ENCODE measurements at regions of chr15 and their contacts with region 1.

Region 1: DNA sequence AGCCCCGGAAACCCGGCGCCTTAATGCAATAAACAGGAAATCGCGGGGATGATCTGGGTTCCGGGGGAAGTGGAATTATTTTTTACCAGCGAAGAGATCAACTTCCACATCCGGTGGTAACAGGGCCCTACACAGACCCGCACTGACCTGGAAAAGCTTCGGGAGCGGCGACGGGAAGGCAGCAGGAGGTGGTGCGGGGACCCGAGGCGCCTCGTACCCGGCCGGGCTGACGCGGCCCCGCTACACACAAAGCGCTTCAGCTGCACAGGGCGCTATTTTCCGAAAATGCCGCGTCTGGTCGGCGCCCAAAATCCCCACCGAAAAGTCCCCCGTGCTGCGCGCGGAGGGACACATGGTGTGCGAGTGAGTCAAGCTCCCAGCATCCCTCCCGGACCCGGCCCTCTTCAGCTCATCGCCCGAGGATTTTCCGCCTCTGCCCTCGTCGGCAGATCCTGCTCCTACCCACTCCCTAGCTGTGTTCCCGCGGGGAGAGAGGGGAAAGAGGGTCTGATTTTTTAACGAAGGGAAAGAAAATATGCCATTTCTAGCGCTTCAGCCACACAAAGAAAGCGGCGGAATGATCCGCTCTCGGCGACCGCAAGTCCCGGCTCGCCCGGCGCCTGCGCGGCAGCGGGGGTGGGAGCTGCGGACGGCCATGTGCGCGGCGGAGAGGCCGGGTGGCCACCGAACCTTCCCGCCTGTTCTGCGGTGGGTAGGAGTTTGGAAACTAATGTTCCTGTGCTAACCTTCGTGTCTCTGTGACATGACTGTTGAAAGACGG is at the start of gene GABPB1:
- DNase-seq: peak; percentile 87 to 95
- ATAC-seq: peak; percentile 53 to 67 (median 63)
- H3K4me3 ChIP-seq: peak within 1 kb of the TSS; percentile 99
- H3K4me3 Mint-ChIP-seq: peak within 1 kb of the TSS; percentile 99
- H3K27ac ChIP-seq: peak within 1 kb of the TSS; percentile 100
- H3K27ac Mint-ChIP-seq: peak within 1 kb of the TSS; percentile 97 to 100
- H3K4me1 ChIP-seq: peaks cover 25% of the 10 kb centered on the region
- H3K4me1 Mint-ChIP-seq: peaks cover 62 to 64% of the 10 kb centered on the region in 2 donors
- H3K27me3 ChIP-seq: no peaks in the 10 kb centered on the region
- H3K27me3 Mint-ChIP-seq: no peaks in the 10 kb centered on the region
- CTCF ChIP-seq: no peak
- total RNA-seq, gene GABPB1: 20.8 to 30.8 (median 26.3) TPM

Region 2: GRCh38 chr15:49155110-49155833 is 1199.8 kb before region 1 on chr15 and contains the start of gene COPS2:
- intact Hi-C with region 1: loop called (anchors 5 kb)
- DNase-seq: peak; percentile 87 to 97
- ATAC-seq: peak; percentile 92 to 99 (median 95)
- H3K4me3 ChIP-seq: peak within 1 kb of the TSS; percentile 87
- H3K4me3 Mint-ChIP-seq: peak within 1 kb of the TSS; percentile 99
- H3K27ac ChIP-seq: peak within 1 kb of the TSS; percentile 90
- H3K27ac Mint-ChIP-seq: peak within 1 kb of the TSS; percentile 95 to 99
- H3K4me1 ChIP-seq: peaks cover 7% of the 10 kb centered on the region
- H3K4me1 Mint-ChIP-seq: peaks cover 27 to 32% of the 10 kb centered on the region in 2 donors
- H3K27me3 ChIP-seq: no peaks in the 10 kb centered on the region
- H3K27me3 Mint-ChIP-seq: no peaks in the 10 kb centered on the region
- CTCF ChIP-seq: no peak
- total RNA-seq, gene COPS2: 77.6 to 90.7 (median 89.3) TPM

Region 3: DNA sequence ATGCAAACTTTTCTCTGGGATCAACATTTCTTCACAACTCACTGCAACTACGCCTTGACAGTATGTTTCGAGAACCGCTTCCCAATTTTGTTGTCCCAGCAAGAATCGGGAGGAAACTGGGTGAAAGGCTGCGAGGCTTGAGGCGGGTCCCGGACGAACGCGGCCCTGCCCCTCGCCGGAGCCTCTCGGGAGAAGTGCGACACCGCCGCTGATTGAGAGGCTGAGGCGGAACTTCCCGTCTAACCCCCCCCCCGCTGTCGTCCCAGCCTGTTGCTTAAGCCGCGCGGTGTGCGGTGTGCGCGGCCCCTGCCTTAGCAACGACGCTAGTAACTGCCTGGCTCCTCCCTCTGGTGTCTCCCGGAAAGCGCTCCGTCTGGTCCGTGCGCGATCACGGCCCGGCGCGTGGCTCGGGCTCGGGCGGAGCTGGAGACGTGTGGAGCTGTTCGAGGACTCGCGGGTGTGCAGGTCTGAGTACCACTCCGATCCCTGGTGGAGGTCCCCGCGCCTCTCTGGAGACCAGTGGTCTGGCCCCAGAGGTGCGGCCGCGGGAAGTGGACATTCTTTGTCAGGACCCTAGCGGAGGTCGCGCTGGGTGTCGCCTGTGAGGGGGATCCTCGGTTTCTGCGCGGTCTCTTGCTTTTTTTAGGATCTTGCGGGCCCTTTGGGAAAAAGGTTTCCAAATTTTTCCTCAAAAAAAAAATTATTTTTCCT is 734.2 kb before region 1 on chr15 and contains the starts of genes DTWD1 and FAM227B:
- intact Hi-C with region 1: loop called (anchors 2 kb)
- DNase-seq: peak; percentile 88 to 97
- ATAC-seq: peak; percentile 96 to 100 (median 98)
- H3K4me3 ChIP-seq: peak within 1 kb of the TSS; percentile 97
- H3K4me3 Mint-ChIP-seq: peak within 1 kb of the TSS; percentile 98
- H3K27ac ChIP-seq: peak within 1 kb of the TSS; percentile 82
- H3K27ac Mint-ChIP-seq: peak within 1 kb of the TSS; percentile 96 to 97
- H3K4me1 ChIP-seq: peaks cover 6% of the 10 kb centered on the region
- H3K4me1 Mint-ChIP-seq: peaks cover 33 to 37% of the 10 kb centered on the region in 2 donors
- H3K27me3 ChIP-seq: no peaks in the 10 kb centered on the region
- H3K27me3 Mint-ChIP-seq: no peaks in the 10 kb centered on the region
- CTCF ChIP-seq: no peak
- total RNA-seq, gene DTWD1: 10.0 to 14.1 (median 12.3) TPM
- total RNA-seq, gene FAM227B: 3.8 to 5.0 (median 4.9) TPM

Region 4: GRCh38 chr15:50260969-50261496 is 94.0 kb before region 1 on chr15:
- intact Hi-C with region 1: loop called (anchors 1 kb)
- DNase-seq: no peak
- ATAC-seq: peak in 2 of 3 donors; percentile 3 to 64
- H3K4me3 ChIP-seq: no peak overlapping the region
- H3K4me3 Mint-ChIP-seq: peak overlapping the region; percentile 72
- H3K27ac ChIP-seq: no peak overlapping the region
- H3K27ac Mint-ChIP-seq: peak overlapping the region; percentile 86 to 88
- H3K4me1 ChIP-seq: peaks cover 47% of the 10 kb centered on the region
- H3K4me1 Mint-ChIP-seq: peaks cover 40 to 42% of the 10 kb centered on the region in 2 donors
- H3K27me3 ChIP-seq: no peaks in the 10 kb centered on the region
- H3K27me3 Mint-ChIP-seq: no peaks in the 10 kb centered on the region
- CTCF ChIP-seq: no peak

Region 5: DNA sequence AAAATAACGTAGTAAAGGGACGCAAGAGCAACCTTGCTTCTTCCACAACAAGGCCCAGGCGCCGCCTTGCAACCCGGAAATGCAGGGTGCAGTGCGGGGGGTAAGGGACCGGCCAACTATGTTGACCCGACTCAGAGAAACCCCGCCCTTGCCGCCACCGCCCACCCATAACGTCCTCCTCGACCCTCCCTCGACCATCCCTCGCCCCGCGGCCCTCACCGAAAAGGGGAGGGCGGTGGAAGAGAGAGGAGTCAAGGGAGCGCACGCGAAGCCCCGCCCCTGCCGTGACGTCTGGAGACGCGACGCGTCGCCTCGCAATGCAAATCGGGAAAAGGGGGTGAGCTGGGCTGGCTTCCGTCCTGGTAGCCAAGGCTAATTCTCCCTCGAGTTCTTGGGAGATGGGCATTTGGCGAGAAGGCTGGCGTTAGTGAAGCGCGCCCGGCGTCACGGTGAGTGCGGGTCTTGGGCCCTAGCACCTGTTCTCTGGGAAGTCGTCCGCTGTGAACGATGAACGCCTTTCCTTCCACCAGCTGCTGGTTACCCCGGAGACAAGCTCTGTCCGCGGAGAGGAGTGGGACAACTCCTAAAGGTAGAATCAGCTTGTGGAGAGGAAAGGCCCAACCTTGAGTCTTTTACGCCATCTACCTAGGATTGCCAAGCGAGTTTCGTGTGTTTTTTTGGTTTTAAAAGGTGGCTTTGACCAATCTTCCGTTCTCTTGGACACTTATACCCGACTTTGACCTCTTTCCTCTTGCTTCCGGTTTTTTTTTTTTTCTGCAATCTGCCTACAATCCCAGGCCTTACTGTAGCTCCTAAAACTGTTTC is 69.2 kb after region 1 on chr15 and contains the start of gene USP8:
- intact Hi-C with region 1: loop called (anchors 1 kb)
- DNase-seq: peak; percentile 93 to 97
- ATAC-seq: peak; percentile 95 to 97 (median 95)
- H3K4me3 ChIP-seq: peak within 1 kb of the TSS; percentile 98
- H3K4me3 Mint-ChIP-seq: peak within 1 kb of the TSS; percentile 99
- H3K27ac ChIP-seq: peak within 1 kb of the TSS; percentile 90
- H3K27ac Mint-ChIP-seq: peak within 1 kb of the TSS; percentile 96 to 98
- H3K4me1 ChIP-seq: peaks cover 11% of the 10 kb centered on the region
- H3K4me1 Mint-ChIP-seq: peaks cover 36 to 39% of the 10 kb centered on the region in 2 donors
- H3K27me3 ChIP-seq: no peaks in the 10 kb centered on the region
- H3K27me3 Mint-ChIP-seq: no peaks in the 10 kb centered on the region
- CTCF ChIP-seq: no peak
- total RNA-seq, gene USP8: 81.0 to 87.7 (median 81.4) TPM

Region 6: DNA sequence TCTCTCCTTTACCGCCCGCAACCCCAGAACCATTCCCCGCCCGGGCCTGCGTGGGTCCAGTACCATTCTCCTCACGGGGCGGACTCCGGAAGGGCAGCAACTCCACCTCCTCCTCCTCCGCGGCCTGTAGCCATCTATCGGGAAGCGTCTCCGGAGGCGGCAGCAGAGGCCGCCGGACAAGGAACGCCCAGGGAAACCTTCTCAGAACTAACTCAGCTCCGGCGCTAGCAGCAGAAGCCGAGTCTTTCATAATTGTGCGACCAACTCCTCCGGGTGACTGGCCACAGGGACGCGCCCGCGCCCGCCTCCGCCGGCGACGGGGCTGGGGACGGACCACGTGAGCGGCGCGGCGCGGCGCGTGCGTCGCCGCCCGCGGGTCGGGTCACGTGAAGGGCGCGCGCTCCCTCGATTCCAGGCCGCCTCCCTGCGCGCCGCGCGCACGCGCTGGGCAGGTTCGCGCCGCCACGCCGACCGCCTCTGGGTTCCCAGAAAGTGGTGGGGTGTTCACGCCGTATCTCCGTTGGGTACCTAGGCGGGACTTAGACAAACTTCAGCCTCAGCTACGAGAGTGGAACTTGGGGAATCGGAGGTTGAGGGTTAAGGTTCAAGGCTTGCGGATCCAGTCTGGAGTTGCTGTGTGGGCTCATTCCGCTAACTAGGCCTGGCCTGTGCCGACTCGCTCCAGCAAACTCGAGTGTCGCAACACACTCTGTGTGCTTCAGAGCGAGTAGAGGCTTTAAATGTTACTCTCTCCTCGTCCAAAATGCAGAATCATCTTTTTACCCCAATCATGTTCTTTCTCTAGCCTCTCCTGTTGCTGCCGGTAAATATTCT is 331.7 kb after region 1 on chr15 and contains the start of gene TRPM7:
- intact Hi-C with region 1: loop called (anchors 10 kb)
- DNase-seq: peak; percentile 92 to 96
- ATAC-seq: peak; percentile 76 to 96 (median 88)
- H3K4me3 ChIP-seq: peak within 1 kb of the TSS; percentile 91
- H3K4me3 Mint-ChIP-seq: peak within 1 kb of the TSS; percentile 99
- H3K27ac ChIP-seq: peak within 1 kb of the TSS; percentile 94
- H3K27ac Mint-ChIP-seq: peak within 1 kb of the TSS; percentile 97
- H3K4me1 ChIP-seq: peaks cover 20% of the 10 kb centered on the region
- H3K4me1 Mint-ChIP-seq: peaks cover 42 to 49% of the 10 kb centered on the region in 2 donors
- H3K27me3 ChIP-seq: no peaks in the 10 kb centered on the region
- H3K27me3 Mint-ChIP-seq: no peaks in the 10 kb centered on the region
- CTCF ChIP-seq: no peak
- total RNA-seq, gene TRPM7: 41.8 to 54.4 (median 50.9) TPM

Region 7: GRCh38 chr15:50774450-50774849 is 419.4 kb after region 1 on chr15:
- intact Hi-C with region 1: loop called (anchors 5 kb)
- DNase-seq: peak in 1 of 2 donors; percentile 63
- ATAC-seq: peak; percentile 81 to 99 (median 97)
- H3K4me3 ChIP-seq: no peak overlapping the region
- H3K4me3 Mint-ChIP-seq: no peak overlapping the region
- H3K27ac ChIP-seq: no peak overlapping the region
- H3K27ac Mint-ChIP-seq: peak overlapping the region; percentile 81 to 91
- H3K4me1 ChIP-seq: peaks cover 8% of the 10 kb centered on the region
- H3K4me1 Mint-ChIP-seq: peaks cover 7 to 15% of the 10 kb centered on the region in 2 donors
- H3K27me3 ChIP-seq: no peaks in the 10 kb centered on the region
- H3K27me3 Mint-ChIP-seq: no peaks in the 10 kb centered on the region
- CTCF ChIP-seq: no peak

Measured in natural killer cell (primary cell).